Calu3 (cell line): ENCODE measurements at regions of chr6 and their contacts with region 1.

Region 1: GRCh38 chr6:49625140-49625539 is 11.5 kb downstream of the RHAG start:
- DNase-seq: no peak
- H3K4me3 Mint-ChIP-seq: no peak overlapping the region
- H3K27ac Mint-ChIP-seq: no peak overlapping the region
- H3K4me1 Mint-ChIP-seq: peaks cover 8% of the 10 kb centered on the region
- H3K27me3 Mint-ChIP-seq: no peaks in the 10 kb centered on the region
- CTCF ChIP-seq: no peak

Region 2: DNA sequence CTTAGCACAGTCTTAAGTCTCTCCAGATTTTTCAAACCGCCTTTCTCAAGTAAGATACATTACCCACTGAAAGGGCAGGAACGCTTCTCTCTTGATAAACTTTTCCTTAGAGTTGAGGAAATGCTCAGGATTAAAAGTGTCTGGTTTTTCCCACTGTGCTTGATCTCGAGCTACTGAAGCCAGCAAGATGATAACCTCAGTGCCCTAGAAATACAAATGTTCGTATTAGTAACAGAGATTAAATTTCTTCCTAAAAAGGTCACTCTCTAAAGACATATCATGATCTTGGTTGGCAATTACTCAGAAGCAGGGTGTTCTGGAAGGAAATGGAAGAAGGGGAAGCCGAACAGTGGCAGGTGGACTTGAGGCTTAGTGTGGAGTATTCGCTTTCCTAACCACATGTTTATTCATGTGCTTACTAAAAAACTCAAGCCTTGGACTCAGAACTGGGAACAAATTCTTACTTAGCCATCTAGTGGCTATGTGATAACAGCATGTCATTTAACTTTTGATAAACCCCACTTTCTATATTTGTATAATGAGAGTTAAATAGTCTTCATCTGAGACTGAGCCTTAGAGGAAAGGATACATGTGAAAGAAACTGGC is 54.6 kb before region 1 on chr6:
- CTCF ChIA-PET with region 1: interaction called, 10 read pairs
- intact Hi-C with region 1: no loop called
- DNase-seq: no peak
- H3K4me3 Mint-ChIP-seq: no peak overlapping the region
- H3K27ac Mint-ChIP-seq: peak overlapping the region; percentile 51
- H3K4me1 Mint-ChIP-seq: peaks cover 40% of the 10 kb centered on the region
- H3K27me3 Mint-ChIP-seq: no peaks in the 10 kb centered on the region
- CTCF ChIP-seq: no peak

Region 3: GRCh38 chr6:49676696-49677281 is 51.6 kb after region 1 on chr6:
- CTCF ChIA-PET with region 1: no interaction called
- intact Hi-C with region 1: loop called (anchors 2 kb)
- DNase-seq: peak; percentile 42
- H3K4me3 Mint-ChIP-seq: peak overlapping the region; percentile 32
- H3K27ac Mint-ChIP-seq: peak overlapping the region; percentile 80
- H3K4me1 Mint-ChIP-seq: peaks cover 29% of the 10 kb centered on the region
- H3K27me3 Mint-ChIP-seq: no peaks in the 10 kb centered on the region
- CTCF ChIP-seq: no peak

Region 4: DNA sequence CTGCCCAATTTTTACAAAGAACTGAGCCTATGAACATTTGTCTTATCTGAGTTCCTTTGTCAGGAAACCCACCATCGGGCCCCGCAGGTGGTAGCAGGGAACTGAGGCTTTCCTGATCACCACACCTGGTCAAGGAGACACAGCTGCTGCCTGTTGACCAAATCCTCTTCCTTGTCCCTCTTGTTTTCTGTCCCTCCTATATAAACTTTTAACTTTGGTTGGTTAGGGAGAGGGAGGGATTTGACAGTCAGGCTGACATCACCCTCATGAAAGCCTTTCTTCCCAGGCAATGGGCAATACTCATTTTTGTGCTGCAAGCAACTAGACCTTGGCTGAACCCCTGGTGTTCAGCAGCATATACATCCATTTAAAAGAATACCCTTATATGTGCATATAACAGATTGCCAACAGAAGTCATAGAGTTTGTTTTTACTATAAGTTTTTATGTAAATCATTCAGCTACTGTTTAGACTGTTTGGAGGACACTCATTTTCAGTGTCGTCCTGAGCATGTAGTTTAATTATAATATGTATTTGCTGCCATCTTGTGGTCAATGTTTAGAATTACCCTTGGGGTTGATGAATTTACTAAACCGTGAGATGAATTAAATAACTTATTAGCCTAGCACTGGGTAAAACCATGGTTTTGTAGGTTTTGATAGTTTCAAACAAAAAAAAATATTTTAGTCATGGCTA is 224.2 kb after region 1 on chr6:
- CTCF ChIA-PET with region 1: interaction called, 37 read pairs
- intact Hi-C with region 1: loop called (anchors 1 kb)
- DNase-seq: no peak
- H3K4me3 Mint-ChIP-seq: no peak overlapping the region
- H3K27ac Mint-ChIP-seq: no peak overlapping the region
- H3K4me1 Mint-ChIP-seq: no peaks in the 10 kb centered on the region
- H3K27me3 Mint-ChIP-seq: no peaks in the 10 kb centered on the region
- CTCF ChIP-seq: peak; percentile 50